Tibial artery (tissue), 4 donors: ENCODE measurements at regions of chr6 and their contacts with region 1.

Region 1: GRCh38 chr6:38808039-38808438 is 92.9 kb downstream of the DNAH8 start:
- DNase-seq: no peak
- H3K4me3 ChIP-seq: no peak overlapping the region
- H3K27ac ChIP-seq: no peak overlapping the region
- H3K4me1 ChIP-seq: no peaks in the 10 kb centered on the region
- H3K27me3 ChIP-seq: no peaks in the 10 kb centered on the region
- CTCF ChIP-seq: no peak

Region 2: DNA sequence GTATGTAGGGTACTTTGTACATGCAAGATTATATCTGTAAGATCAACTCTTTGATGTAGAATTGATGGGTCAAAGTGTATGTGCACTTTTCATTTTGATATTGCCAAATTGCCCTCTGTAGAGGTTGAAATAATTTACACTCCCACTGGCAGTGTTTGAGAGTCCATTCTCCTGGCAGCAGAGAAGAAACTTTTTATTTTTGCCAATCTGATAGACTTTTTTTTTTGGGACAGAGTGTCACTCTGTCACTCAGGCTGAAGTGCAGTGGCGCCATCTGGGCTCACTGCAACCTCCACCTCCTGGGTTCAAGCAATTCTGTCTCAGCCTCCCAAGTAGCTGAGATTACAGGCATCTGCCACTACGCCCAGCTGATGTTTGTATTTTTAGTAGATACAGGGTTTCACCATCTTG is 789.3 kb before region 1 on chr6:
- intact Hi-C with region 1: no loop called
- DNase-seq: no peak
- H3K4me3 ChIP-seq: no peak overlapping the region
- H3K27ac ChIP-seq: no peak overlapping the region
- H3K4me1 ChIP-seq: peaks cover 0 to 30% (median 8%) of the 10 kb centered on the region in 4 donors
- H3K27me3 ChIP-seq: no peaks in the 10 kb centered on the region
- CTCF ChIP-seq: no peak

Region 3: GRCh38 chr6:38750968-38751615 is 56.9 kb before region 1 on chr6:
- intact Hi-C with region 1: loop called (anchors 2 kb)
- DNase-seq: no peak
- H3K4me3 ChIP-seq: no peak overlapping the region
- H3K27ac ChIP-seq: no peak overlapping the region
- H3K4me1 ChIP-seq: no peaks in the 10 kb centered on the region
- H3K27me3 ChIP-seq: no peaks in the 10 kb centered on the region
- CTCF ChIP-seq: no peak